Posterior vena cava (tissue), 2 donors: ENCODE measurements at regions of chr18 and their contacts with region 1.

Region 1: GRCh38 chr18:7232218-7232617 is 1.3 kb downstream of the LRRC30 start:
- DNase-seq: no peak

Region 2: DNA sequence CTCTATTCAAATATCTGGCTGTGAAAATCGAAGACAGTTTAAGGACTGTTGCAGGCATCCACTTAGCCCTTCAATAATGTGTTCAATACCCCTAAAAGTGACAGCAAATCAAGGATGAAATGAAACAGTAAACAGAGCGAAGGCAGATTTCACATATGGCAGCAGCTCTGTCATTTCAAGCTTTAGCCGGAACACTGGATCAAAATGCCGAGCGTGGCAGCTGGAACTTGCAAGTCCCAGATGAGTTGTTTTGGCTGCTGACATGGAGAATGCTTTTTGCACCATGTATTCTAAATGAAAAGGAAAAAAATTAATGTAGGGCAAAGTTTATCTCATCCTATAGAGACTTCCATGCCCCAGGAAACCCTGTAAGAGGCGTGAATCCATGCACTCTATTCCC is 16.7 kb after region 1 on chr18:
- intact Hi-C with region 1: loop called in 1 of 2 experiments (anchors 1 kb)
- DNase-seq: no peak

Region 3: DNA sequence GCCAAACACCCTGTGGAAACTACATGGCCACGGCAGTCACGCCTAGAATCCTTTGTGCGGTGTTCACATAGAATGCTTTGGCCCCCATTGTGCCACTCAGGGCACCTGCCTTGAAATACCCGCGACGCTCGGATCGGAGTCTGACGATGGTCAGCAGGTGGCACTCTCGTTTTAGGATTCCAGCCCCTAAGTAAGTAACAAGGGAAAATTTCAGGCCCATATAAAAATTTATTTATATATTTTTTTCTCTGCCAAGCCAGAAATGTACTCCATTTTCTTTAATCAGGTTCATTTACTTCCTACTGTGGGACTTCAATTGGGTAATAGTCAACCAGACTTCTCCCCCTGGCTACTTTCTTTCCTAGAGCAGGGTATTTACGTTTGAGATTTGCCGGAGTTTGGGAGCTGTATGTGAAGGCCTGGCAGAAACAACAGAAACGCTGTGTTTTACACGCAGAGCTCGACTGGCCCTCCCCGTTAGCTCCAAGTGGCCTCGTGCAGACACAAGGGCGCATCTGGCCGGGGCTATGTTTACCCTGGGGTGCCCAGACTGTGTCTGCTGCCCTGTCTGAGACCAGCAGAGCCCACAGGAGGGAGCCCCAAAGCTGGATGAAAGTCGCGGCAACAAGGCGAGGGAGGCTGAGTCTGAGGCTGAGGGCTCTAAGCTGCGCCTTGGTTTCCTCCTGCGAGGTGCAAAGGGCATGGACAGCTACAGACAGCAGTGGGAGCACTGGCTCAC is 40.3 kb after region 1 on chr18:
- intact Hi-C with region 1: no loop called
- DNase-seq: peak; percentile 88